Activated naive CD4-positive, alpha-beta T cell treated with anti-CD3 and anti-CD28 coated beads for 36 hours (primary cell): ENCODE measurements at regions of chr5 and their contacts with region 1.

Region 1: GRCh38 chr5:100903039-100903887 is at the start of gene ST8SIA4:
- DNase-seq: peak; percentile 95
- H3K4me3 Mint-ChIP-seq: peak within 1 kb of the TSS; percentile 95
- H3K27ac Mint-ChIP-seq: peak within 1 kb of the TSS; percentile 99
- H3K4me1 Mint-ChIP-seq: peaks cover 32% of the 10 kb centered on the region
- H3K27me3 Mint-ChIP-seq: no peaks in the 10 kb centered on the region
- total RNA-seq, gene ST8SIA4: 11.2 to 16.2 TPM

Region 2: DNA sequence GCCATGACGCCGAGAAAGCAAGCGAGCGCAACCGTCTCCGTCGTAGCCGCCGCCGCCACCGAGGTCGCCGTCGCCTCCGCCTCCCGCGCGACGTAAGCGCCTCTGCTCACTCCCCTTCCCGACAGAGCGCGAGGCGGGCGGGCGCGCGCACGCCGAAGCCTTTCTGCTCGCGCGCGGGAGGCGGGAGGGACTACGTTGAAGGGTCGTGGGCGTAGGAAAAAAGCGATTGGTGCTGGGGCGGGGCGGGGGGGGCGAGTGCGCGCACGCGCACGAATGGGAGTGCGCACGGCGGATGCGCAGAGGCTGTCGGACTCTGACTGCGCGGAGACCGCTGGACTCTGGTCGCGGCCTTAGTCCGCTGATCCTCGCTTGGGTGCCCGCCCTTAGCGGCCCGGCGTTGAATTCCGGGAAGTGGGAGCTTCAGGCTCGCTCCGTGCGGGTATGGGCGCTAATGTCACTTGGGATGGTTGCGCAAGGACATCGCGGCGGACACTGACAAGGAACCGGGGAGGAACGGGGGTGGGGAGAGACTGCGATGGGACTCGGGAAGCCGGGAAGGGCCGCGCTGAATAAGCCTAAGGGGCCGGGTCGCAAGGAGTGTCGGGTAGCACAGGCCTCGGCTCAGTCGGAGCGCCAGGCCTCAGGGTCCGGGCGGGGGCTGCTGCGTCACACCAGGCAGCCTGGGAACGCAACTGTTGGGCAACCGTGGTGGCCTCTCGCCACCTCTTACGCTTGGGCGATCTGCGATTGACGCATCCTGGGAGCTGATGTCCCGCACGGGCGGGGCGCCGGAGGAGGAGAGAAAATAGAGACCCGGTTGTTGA is 1974.2 kb before region 1 on chr5 and contains the start of gene CHD1:
- CTCF ChIA-PET with region 1: no interaction called
- intact Hi-C with region 1: loop called (anchors 1 kb)
- DNase-seq: peak; percentile 97
- H3K4me3 Mint-ChIP-seq: peak within 1 kb of the TSS; percentile 93
- H3K27ac Mint-ChIP-seq: peak within 1 kb of the TSS; percentile 100
- H3K4me1 Mint-ChIP-seq: peaks cover 57% of the 10 kb centered on the region
- H3K27me3 Mint-ChIP-seq: no peaks in the 10 kb centered on the region
- total RNA-seq, gene CHD1: 50.5 to 52.1 TPM

Region 3: DNA sequence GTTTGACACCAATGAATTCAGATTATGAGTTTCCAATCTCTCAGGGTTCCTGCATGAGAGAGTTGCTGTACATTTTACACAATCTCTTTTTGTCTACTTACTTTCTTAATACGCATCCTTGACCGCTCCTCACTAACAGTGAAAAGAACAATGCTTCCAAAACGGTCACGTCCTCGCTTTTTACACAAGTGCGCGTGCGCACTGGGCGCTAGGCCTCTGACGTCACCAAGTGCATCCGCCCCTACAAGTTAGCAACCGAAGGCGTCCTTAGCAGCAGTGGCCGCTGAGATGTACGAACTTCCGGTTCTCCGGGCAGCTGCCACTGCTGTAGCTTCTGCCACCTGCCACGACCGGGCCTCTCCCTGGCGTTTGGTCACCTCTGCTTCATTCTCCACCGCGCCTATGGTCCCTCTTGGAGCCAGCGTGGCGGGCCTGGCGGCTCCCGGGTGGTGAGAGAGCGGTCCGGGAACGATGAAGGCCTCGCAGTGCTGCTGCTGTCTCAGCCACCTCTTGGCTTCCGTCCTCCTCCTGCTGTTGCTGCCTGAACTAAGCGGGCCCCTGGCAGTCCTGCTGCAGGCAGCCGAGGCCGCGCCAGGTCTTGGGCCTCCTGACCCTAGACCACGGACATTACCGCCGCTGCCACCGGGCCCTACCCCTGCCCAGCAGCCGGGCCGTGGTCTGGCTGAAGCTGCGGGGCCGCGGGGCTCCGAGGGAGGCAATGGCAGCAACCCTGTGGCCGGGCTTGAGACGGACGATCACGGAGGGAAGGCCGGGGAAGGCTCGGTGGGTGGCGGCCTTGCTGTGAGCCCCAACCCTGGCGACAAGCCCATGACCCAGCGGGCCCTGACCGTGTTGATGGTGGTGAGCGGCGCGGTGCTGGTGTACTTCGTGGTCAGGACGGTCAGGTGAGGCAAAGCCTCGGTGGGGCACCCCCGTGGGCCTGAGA is 367.9 kb before region 1 on chr5 and contains the start of gene FAM174A:
- CTCF ChIA-PET with region 1: no interaction called
- intact Hi-C with region 1: loop called (anchors 1 kb)
- DNase-seq: peak; percentile 96
- H3K4me3 Mint-ChIP-seq: peak within 1 kb of the TSS; percentile 94
- H3K27ac Mint-ChIP-seq: peak within 1 kb of the TSS; percentile 75
- H3K4me1 Mint-ChIP-seq: peaks cover 16% of the 10 kb centered on the region
- H3K27me3 Mint-ChIP-seq: no peaks in the 10 kb centered on the region
- total RNA-seq, gene FAM174A: 3.1 to 3.9 TPM

Region 4: DNA sequence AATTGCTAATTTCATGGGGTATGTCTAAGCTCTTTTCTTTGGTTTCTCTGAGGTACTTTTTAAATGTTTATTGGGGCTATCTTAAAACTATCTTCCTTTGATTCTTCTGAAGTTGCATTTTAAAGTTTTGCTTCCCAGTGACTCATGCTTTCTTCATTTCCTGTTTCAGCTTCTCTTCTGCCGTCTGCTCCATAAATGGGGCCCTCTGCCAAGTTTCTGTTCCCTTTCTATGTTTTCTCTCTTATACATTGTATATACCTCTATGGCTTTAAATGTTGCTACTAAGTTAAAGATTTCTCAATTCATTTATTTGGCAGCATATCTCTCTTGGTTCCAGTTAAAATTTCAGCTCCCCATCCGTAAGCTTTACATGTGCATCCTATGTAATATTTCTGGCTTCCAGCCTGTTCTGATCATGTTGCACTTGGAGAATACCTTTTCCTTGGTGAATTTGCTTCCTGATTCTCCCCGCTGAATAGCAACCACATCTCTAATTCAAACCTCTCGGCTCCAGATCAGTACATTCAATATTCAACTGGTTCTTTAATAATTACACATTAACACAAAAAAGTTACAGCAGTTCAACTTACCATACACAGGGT is 125.5 kb before region 1 on chr5:
- CTCF ChIA-PET with region 1: interaction called, 33 read pairs
- intact Hi-C with region 1: loop called (anchors 1 kb)
- DNase-seq: peak; percentile 56
- H3K4me3 Mint-ChIP-seq: no peak overlapping the region
- H3K27ac Mint-ChIP-seq: peak overlapping the region; percentile 74
- H3K4me1 Mint-ChIP-seq: peaks cover 43% of the 10 kb centered on the region
- H3K27me3 Mint-ChIP-seq: no peaks in the 10 kb centered on the region

Region 5: DNA sequence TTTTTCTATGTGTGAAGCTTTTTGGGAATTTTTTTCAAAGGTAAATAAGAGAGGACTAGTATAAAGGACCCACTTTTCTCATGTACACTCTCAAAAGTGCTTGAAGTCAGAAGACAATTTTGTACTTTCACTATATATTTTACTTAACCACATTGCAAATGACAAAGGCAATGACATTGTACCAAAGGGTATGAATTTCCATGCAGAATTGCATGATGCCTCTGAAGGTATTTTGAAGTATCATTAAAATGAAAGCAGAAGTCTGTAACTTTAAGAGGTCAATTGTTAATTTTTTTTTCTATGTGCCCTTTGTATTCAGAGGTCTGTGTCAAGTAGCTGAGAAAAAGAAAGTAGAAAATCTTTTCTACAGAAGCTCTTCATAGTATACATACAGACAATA is 84.9 kb before region 1 on chr5:
- CTCF ChIA-PET with region 1: no interaction called
- intact Hi-C with region 1: no loop called
- DNase-seq: no peak
- H3K4me3 Mint-ChIP-seq: no peak overlapping the region
- H3K27ac Mint-ChIP-seq: no peak overlapping the region
- H3K4me1 Mint-ChIP-seq: peaks cover 29% of the 10 kb centered on the region
- H3K27me3 Mint-ChIP-seq: no peaks in the 10 kb centered on the region

Region 6: DNA sequence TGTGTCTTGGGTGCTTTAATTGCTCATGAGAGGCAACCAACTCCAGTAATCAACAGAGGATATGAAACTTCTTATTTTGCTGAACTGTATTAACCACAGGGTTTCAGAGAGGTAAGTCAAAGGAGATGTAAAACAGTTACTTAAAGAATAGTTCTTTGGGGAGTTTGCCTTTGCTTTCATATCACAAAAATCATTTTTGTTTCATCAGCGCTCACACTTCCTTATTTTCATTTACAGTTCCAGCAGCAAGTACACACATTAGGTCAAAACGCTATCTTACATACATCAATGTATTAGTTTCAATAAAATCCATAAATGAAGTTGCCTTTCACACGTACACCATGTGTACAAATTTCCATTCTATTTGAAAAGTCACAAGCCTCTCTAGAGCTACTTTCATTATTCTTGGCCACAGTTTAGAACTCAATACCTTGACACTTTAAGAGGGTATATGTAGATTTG is 50.2 kb before region 1 on chr5:
- CTCF ChIA-PET with region 1: interaction called, 4 read pairs
- intact Hi-C with region 1: loop called (anchors 1 kb)
- DNase-seq: no peak
- H3K4me3 Mint-ChIP-seq: peak overlapping the region; percentile 51
- H3K27ac Mint-ChIP-seq: peak overlapping the region; percentile 73
- H3K4me1 Mint-ChIP-seq: peaks cover 34% of the 10 kb centered on the region
- H3K27me3 Mint-ChIP-seq: no peaks in the 10 kb centered on the region

Region 7: GRCh38 chr5:100913298-100913697 is 10.0 kb after region 1 on chr5:
- CTCF ChIA-PET with region 1: no interaction called
- intact Hi-C with region 1: loop called (anchors 1 kb)
- DNase-seq: no peak
- H3K4me3 Mint-ChIP-seq: no peak overlapping the region
- H3K27ac Mint-ChIP-seq: no peak overlapping the region
- H3K4me1 Mint-ChIP-seq: peaks cover 14% of the 10 kb centered on the region
- H3K27me3 Mint-ChIP-seq: no peaks in the 10 kb centered on the region

Region 8: GRCh38 chr5:102762095-102762534 is 1858.9 kb after region 1 on chr5:
- CTCF ChIA-PET with region 1: no interaction called
- intact Hi-C with region 1: loop called (anchors 5 kb)
- DNase-seq: no peak
- H3K4me3 Mint-ChIP-seq: peak overlapping the region; percentile 48
- H3K27ac Mint-ChIP-seq: peak overlapping the region; percentile 86
- H3K4me1 Mint-ChIP-seq: peaks cover 82% of the 10 kb centered on the region
- H3K27me3 Mint-ChIP-seq: no peaks in the 10 kb centered on the region